GM10248 (cell line): ENCODE measurements at regions of chr4 and their contacts with region 1.

Region 1: GRCh38 chr4:122758033-122758432 is 25.5 kb downstream of the BBS12 start:
- DNase-seq: peak; percentile 26
- CTCF ChIP-seq: peak; percentile 49

Region 2: DNA sequence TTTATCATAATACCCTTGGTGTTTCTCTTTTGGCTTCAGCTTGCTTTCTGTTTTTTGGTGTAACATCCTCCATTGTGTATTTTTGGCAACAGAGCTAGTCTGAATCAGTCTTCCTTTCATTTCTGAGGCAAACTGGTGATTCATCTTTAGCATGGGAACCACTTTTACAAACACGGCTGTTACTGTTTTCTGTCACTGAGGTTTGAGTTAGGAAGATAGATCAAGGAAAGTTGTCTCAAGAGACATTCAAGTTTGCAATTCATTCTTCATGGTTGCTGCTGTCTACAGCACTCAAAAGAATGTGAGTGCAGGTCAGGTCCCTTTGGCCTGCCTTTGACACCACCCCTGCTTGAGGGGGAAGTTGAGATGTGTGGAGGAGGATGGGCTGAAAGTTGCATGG is 173.5 kb before region 1 on chr4:
- CTCF ChIA-PET with region 1: no interaction called
- POLR2A ChIA-PET with region 1: no interaction called
- DNase-seq: peak; percentile 25
- CTCF ChIP-seq: no peak

Region 3: DNA sequence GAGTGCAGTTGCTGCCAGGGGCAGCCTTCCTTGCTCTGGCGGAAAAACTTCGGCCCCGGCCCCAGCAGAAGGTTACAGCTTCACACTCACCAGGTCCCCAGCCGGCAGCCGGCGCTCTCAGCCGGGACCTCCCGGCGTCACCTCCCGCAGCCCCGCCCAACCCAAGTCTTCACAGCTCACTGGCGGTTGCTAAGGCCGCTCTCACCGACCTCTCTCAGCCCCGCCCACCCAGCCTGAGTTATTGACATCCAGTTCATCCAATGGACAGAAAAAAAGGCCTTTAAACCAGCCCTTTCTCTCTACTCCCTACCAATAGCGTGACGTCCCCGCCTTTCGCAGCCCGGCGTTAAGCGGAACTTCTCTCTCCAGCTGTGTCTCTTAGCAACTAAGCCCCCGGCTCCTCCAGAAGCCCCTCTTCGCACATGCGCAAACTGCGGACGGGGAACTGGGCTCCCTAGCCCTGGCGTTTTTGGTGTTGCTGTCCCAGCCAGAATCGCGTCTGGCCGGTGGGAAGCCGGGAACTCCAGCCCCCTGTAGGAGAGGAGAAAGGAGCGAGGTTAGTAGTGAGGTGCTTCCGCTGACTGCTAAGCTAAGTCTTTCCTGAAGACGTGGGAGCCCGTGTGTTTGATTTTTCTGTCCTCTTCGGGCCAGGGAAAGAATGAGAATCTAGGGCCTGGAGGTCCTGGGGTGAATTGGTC is 25.6 kb before region 1 on chr4 and contains the start of gene BBS12:
- CTCF ChIA-PET with region 1: interaction called, 13 read pairs
- POLR2A ChIA-PET with region 1: no interaction called
- DNase-seq: peak; percentile 98
- CTCF ChIP-seq: peak; percentile 51

Region 4: DNA sequence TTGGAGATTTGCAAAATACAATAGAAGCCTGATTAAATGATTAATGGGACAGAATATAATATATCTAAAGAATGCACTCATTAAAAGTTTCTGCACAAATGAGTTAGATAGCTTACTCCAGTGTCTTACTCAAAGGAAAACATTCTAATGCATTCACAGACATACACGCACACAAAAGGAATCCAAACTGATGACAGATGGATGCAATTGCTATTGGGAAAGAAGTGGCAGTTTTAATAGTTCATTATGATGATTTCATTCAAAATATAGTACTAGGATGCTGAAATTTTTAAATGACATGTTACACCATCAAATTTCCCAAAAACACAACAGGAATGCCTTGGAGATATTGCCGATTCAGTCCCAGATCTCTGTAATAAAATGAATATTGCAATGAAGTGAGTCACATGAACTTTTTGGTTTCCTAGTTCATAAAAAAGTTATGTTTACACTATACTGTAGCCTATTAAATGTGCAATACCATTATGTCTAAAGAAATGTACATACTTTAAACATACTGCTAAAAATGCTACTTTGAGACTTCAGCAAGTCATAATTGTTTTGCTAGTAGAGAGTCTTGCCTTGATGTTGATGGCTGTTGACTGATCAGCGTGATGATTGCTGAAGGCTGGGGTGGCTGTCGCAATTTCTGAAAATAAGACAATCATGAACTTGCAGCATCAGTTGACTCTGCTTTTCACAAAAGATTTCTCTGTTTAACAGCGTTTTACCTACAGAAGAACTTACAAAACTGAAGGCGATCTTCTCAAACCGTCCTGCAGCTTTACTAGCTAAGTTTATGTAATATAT is 20.0 kb after region 1 on chr4:
- CTCF ChIA-PET with region 1: interaction called, 19 read pairs
- POLR2A ChIA-PET with region 1: no interaction called
- DNase-seq: no peak
- CTCF ChIP-seq: no peak

Region 5: DNA sequence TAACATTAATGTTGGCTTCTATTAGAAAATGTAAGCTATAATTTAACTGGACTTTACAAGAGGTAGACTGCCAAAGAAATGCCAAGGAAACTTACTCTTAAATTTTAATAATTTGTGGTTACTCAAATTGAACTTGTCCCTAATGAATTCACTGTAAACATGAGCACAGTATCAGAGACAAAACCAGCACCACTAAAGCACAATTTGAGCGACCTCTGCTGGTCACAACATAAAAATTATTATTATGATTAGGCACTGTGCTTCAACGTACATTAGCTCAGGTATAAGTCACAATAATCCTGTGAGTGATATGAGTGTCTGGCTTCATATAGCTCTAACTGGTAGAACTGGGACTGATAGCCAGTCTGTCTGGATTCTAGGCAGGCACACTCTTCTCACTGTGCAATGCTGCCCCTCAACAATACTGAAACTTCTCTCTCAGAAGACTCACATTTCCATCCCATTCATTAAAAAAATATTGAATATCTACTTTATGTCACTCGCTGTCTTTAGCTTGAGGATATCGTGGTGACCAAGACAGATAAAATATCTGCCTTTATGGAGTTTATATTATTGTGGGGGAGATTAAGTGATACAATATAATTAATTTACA is 156.4 kb after region 1 on chr4:
- CTCF ChIA-PET with region 1: interaction called, 37 read pairs
- POLR2A ChIA-PET with region 1: no interaction called
- DNase-seq: peak; percentile 20
- CTCF ChIP-seq: peak; percentile 38

Region 6: DNA sequence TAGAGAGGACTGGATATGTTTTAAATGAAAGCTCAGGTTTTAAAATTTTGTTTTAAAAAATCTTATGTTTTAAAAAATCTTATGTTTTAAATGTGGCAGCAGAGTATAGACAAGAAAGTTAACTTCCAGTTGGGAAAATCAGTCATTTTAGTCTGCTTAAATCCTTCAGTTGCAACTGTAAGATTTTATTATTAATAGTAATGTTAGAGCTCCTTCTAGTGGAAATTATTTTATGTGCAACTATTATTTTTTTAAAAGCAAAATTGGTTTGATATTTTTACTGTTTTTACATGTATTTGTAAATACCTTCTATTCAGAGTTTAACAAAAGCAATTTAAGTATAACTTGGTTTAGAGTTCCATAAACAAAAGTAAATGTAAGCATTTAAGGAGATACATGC is 172.8 kb after region 1 on chr4:
- CTCF ChIA-PET with region 1: interaction called, 26 read pairs
- POLR2A ChIA-PET with region 1: no interaction called
- DNase-seq: no peak
- CTCF ChIP-seq: peak; percentile 38